ENCODE measurements at regions of chr12 and their contacts with region 1.

Region 1: DNA sequence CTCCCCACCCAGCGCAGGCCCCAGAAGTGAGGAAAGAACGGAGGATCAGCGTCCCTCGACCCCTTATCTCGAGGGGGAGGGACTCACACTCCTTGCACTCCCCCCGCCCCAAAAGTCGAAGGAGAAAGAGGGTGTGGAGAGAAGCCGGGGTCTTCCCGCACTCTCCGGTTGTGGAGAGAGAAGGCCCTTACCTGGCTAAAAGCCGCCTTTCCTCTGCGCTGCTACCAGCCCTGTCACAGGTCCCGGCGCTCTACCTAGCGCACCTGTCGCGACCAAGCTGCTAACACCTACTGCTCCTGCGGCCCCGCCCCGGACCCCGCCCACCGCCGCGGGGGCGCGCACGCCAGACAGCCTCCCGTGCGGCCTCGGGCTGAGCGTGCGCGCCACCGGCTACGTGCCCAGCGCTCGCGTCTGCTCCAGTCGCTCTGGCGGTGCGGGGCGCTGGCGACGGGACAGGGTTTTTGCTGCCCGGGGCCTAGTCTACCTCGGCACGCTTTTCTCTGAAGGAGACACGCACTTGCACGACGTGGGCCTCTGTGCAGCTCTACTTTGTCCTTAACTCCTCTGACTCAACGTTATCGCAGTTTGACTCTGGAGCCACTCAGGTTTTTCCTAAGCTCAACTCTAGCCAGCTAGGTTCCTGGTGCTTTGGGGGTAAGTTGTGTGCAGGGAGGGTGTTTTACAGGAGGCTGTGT is at the start of gene LIMA1:
- DNase-seq: peak; percentile 88 to 91
- H3K4me3 ChIP-seq: peak within 1 kb of the TSS; percentile 59 to 94
- H3K27ac ChIP-seq: peak within 1 kb of the TSS; percentile 79 to 93
- H3K4me1 ChIP-seq: peaks cover 0 to 4% of the 10 kb centered on the region in 2 donors
- H3K27me3 ChIP-seq: no peaks in the 10 kb centered on the region
- CTCF ChIP-seq: peak; percentile 58 to 82 (median 72)
- POLR2A ChIP-seq: peak; percentile 38 to 65
- total RNA-seq, gene LIMA1: 85.0 to 140 (median 116) TPM

Region 2: DNA sequence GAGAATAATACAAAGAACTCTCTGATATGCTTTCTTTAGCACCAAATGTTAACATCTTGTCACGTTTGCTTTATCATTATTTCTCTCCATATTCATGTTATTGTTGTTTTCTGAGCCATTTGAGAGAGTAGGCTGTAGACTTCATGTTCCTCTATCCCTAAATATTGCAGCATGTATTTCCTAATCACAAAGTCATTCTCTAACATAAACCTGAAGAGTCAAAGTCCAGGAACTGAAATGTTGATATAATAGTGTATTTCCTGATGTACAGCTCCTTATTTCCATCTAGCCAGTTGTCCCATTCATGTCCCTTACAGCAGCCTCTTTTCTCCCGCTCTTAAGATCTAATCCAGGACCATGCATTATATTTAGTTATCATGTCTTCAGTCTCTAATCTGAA is 843.3 kb before region 1 on chr12:
- intact Hi-C with region 1: no loop called
- DNase-seq: no peak
- H3K4me3 ChIP-seq: no peak overlapping the region
- H3K27ac ChIP-seq: no peak overlapping the region
- H3K4me1 ChIP-seq: no peaks in the 10 kb centered on the region
- H3K27me3 ChIP-seq: no peaks in the 10 kb centered on the region
- CTCF ChIP-seq: no peak
- POLR2A ChIP-seq: no peak

Region 3: DNA sequence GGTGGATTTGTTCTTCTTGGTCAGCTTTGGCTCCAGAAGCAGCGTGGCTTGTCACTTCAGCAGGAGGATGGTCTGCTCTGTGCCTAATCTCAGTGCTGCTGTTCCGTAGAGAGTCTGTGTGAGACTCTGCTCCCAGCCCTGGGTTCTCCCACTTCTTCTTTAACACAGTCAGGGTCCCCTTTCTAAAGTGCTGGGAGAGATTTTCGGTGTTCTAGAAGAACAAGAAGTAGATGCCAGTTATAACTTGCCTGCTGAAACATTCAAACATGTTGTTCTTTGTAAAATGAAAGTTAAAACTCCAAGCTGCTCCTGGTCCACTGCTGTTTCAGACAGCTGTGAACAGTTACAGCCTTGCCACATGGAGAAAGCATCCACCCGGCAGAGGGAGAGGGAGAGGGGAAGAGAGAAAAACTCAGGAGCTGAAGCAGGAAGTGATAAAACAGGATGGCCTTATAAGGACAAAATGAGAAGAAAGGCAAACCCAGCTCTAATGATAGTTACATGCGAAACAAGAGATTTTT is 61.0 kb before region 1 on chr12:
- intact Hi-C with region 1: loop called (anchors 10 kb)
- DNase-seq: peak; percentile 69 to 78
- H3K4me3 ChIP-seq: peak overlapping the region; percentile 43 to 50
- H3K27ac ChIP-seq: peak overlapping the region; percentile 88 to 90
- H3K4me1 ChIP-seq: peaks cover 0 to 6% of the 10 kb centered on the region in 2 donors
- H3K27me3 ChIP-seq: no peaks in the 10 kb centered on the region
- CTCF ChIP-seq: peak; percentile 21 to 52 (median 38)
- POLR2A ChIP-seq: peak; percentile 42 to 78

Region 4: GRCh38 chr12:50246873-50247612 is 36.3 kb before region 1 on chr12:
- intact Hi-C with region 1: no loop called
- DNase-seq: peak; percentile 72 to 88
- H3K4me3 ChIP-seq: no peak overlapping the region
- H3K27ac ChIP-seq: peak overlapping the region; percentile 58 to 79
- H3K4me1 ChIP-seq: peaks cover 0 to 6% of the 10 kb centered on the region in 2 donors
- H3K27me3 ChIP-seq: no peaks in the 10 kb centered on the region
- CTCF ChIP-seq: no peak
- POLR2A ChIP-seq: no peak

Region 5: GRCh38 chr12:50338920-50339645 is 55.7 kb after region 1 on chr12:
- intact Hi-C with region 1: no loop called
- DNase-seq: no peak
- H3K4me3 ChIP-seq: no peak overlapping the region
- H3K27ac ChIP-seq: no peak overlapping the region
- H3K4me1 ChIP-seq: no peaks in the 10 kb centered on the region
- H3K27me3 ChIP-seq: no peaks in the 10 kb centered on the region
- CTCF ChIP-seq: no peak
- POLR2A ChIP-seq: no peak

Region 6: GRCh38 chr12:50365709-50366406 is 82.5 kb after region 1 on chr12:
- intact Hi-C with region 1: no loop called
- DNase-seq: no peak
- H3K4me3 ChIP-seq: no peak overlapping the region
- H3K27ac ChIP-seq: no peak overlapping the region
- H3K4me1 ChIP-seq: no peaks in the 10 kb centered on the region
- H3K27me3 ChIP-seq: no peaks in the 10 kb centered on the region
- CTCF ChIP-seq: no peak
- POLR2A ChIP-seq: no peak

Measured in uterus (tissue), 4 donors.